ENCODE measurements at regions of chr9 and their contacts with region 1.

Region 1: DNA sequence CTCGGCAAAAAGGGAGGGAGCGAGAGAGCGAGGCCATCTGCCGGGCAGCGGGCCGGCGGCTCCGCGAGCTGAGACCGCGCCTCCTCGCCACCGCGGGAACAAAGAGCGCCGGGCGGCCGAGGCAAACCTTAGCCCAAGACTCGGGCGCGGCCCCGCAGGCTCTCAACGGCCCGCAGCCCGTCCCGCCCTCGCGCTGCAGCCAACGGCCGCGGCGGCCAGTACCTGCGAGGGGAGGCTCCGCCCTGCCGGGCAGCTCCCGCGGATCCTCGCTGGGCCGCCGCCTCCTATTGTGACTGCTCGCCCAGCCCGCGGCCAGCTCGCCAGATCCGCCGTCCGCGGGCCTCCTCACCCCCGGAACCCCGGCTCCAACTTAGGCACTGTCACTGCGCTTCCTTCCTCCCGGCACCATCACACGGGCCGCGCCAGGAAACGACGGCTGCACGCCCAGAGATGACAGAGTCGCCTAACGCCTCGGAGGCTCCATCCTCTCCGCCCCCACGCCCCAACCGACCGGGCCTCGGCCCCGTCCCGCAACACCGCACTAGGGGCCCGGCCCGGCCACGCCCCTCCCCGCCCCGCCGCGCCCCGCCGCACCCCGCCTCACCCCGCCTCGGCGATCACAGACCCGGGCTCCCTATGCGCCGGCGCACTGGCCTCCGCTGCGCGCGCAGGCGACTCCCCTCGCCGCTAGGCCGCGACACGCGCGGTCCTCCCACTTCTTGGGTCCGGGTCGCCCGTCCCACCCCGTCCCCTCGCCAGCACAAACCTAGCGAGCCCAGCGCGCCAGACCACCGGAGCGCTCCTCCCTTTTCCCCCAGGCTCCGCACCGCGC is 479 bp upstream of the RNF38 start:
- DNase-seq: no peak
- H3K4me3 ChIP-seq: peak overlapping the region; percentile 79
- H3K27ac ChIP-seq: peak overlapping the region; percentile 75
- H3K27me3 ChIP-seq: no peaks in the 10 kb centered on the region
- CTCF ChIP-seq: no peak

Region 2: DNA sequence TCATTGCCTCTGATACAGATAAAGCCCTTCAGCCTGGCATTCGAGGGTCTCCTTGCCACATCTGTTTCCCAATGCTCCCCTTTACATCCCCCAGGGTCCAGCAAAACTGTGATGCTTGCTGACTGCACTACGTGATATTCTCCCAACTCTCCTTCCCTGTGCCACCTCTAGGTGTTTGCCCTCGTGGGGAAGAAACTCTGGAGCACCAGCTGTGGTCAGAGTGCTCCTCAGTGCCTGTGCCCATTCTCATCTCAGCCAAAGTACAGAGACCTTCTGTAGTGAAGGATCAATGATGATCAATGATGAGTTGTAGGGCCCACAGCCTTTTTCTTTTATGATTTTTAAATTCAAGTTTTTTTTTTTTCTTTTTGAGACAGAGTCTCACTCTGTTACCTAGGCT is 131.8 kb after region 1 on chr9:
- CTCF ChIA-PET with region 1: no interaction called
- POLR2A ChIA-PET with region 1: no interaction called
- DNase-seq: no peak
- H3K4me3 ChIP-seq: no peak overlapping the region
- H3K27ac ChIP-seq: no peak overlapping the region
- H3K27me3 ChIP-seq: peaks cover 2% of the 10 kb centered on the region
- CTCF ChIP-seq: no peak

Region 3: DNA sequence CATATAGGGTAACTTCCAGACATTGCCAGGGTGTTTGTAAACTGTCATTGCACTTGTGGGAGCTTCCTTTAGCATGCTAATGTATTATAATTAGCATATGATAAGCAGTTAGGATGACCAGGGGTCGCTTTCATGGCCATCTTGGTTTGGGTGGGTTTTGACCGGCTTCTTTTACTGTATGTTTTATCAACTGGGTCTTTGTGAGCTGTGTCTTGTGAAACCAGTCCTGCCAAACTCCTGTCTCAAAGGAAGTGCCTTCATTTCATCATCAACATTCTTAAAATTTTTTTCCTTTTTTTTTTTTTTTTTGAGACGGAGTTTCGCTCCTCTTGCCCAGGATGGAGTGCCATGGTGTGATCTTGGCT is 160.3 kb after region 1 on chr9:
- CTCF ChIA-PET with region 1: interaction called, 167 read pairs
- POLR2A ChIA-PET with region 1: interaction called, 6 read pairs
- DNase-seq: no peak
- H3K4me3 ChIP-seq: no peak overlapping the region
- H3K27ac ChIP-seq: no peak overlapping the region
- H3K27me3 ChIP-seq: no peaks in the 10 kb centered on the region
- CTCF ChIP-seq: no peak